ENCODE measurements at regions of chr14 and their contacts with region 1.

Region 1: DNA sequence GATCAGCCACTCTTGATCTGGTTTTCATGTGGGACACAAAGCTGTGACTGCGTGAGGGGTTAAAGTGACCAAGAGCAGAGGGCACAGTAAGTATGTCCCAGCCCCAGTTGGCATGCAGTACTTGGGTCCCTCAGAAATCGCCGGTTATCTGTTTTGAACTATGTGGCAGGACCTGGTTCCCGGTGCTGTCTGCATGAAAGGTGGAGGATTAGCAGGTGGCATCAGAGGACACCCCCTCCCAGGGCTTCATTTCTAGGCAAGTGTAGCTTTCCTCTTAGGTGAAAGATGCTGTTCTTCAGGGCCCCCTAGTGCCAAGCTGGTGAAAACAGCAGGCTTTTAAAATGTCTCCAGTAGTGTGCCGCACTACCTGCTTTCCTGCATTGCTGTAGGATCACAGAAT is 57.1 kb downstream of the ATG14 start:
- DNase-seq: peak; percentile 31 to 82 (median 57)
- ATAC-seq: peak; percentile 92
- H3K4me3 ChIP-seq: no peak overlapping the region
- H3K4me3 Mint-ChIP-seq: peak overlapping the region; percentile 72
- H3K27ac ChIP-seq: peak overlapping the region in 1 of 2 experiments; percentile 64
- H3K27ac Mint-ChIP-seq: peak overlapping the region; percentile 93
- H3K4me1 ChIP-seq: no peaks in the 10 kb centered on the region
- H3K4me1 Mint-ChIP-seq: peaks cover 15% of the 10 kb centered on the region
- H3K27me3 ChIP-seq: no peaks in the 10 kb centered on the region
- H3K27me3 Mint-ChIP-seq: no peaks in the 10 kb centered on the region
- CTCF ChIP-seq: peak; percentile 59

Region 2: GRCh38 chr14:55085060-55085660 is 269.3 kb before region 1 on chr14:
- CTCF ChIA-PET with region 1: interaction called, 3 read pairs
- POLR2A ChIA-PET with region 1: no interaction called
- intact Hi-C with region 1: loop called (anchors 5 kb)
- DNase-seq: peak in 1 of 9 experiments; percentile 5
- ATAC-seq: no peak
- H3K4me3 ChIP-seq: no peak overlapping the region
- H3K4me3 Mint-ChIP-seq: no peak overlapping the region
- H3K27ac ChIP-seq: no peak overlapping the region
- H3K27ac Mint-ChIP-seq: no peak overlapping the region
- H3K4me1 ChIP-seq: no peaks in the 10 kb centered on the region
- H3K4me1 Mint-ChIP-seq: peaks cover 3% of the 10 kb centered on the region
- H3K27me3 ChIP-seq: no peaks in the 10 kb centered on the region
- H3K27me3 Mint-ChIP-seq: no peaks in the 10 kb centered on the region
- CTCF ChIP-seq: no peak

Region 3: GRCh38 chr14:55094321-55095157 is 260.0 kb before region 1 on chr14:
- CTCF ChIA-PET with region 1: interaction called, 3 read pairs
- POLR2A ChIA-PET with region 1: no interaction called
- intact Hi-C with region 1: loop called (anchors 5 kb)
- DNase-seq: no peak
- ATAC-seq: no peak
- H3K4me3 ChIP-seq: no peak overlapping the region
- H3K4me3 Mint-ChIP-seq: no peak overlapping the region
- H3K27ac ChIP-seq: no peak overlapping the region
- H3K27ac Mint-ChIP-seq: no peak overlapping the region
- H3K4me1 ChIP-seq: peaks cover 12% of the 10 kb centered on the region
- H3K4me1 Mint-ChIP-seq: peaks cover 16% of the 10 kb centered on the region
- H3K27me3 ChIP-seq: no peaks in the 10 kb centered on the region
- H3K27me3 Mint-ChIP-seq: no peaks in the 10 kb centered on the region
- CTCF ChIP-seq: no peak

Region 4: GRCh38 chr14:55180434-55180833 is 174.1 kb before region 1 on chr14:
- CTCF ChIA-PET with region 1: no interaction called
- POLR2A ChIA-PET with region 1: no interaction called
- intact Hi-C with region 1: no loop called
- DNase-seq: no peak
- ATAC-seq: no peak
- H3K4me3 ChIP-seq: no peak overlapping the region
- H3K4me3 Mint-ChIP-seq: no peak overlapping the region
- H3K27ac ChIP-seq: no peak overlapping the region
- H3K27ac Mint-ChIP-seq: no peak overlapping the region
- H3K4me1 ChIP-seq: no peaks in the 10 kb centered on the region
- H3K4me1 Mint-ChIP-seq: peaks cover 6% of the 10 kb centered on the region
- H3K27me3 ChIP-seq: no peaks in the 10 kb centered on the region
- H3K27me3 Mint-ChIP-seq: no peaks in the 10 kb centered on the region
- CTCF ChIP-seq: no peak

Region 5: DNA sequence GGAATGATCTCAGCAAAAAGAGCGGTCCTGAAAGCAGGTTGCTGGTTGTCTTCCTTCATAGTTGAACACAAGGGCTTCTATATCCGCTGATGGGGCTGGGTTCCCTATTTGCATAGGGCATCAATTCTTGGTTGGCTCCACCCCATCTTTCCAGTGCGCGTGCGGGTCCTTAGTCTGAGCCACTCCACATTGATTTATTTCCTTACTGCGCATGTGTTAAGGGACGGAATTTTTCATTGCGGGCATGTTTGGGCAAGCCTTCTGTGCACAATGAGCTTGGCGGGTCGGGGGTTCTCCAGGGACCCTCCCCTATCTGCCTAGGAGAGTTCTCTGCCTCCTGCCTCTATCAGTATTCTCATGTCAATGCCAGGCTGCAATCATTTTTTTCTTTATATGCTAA is 141.9 kb before region 1 on chr14:
- CTCF ChIA-PET with region 1: interaction called, 22 read pairs
- POLR2A ChIA-PET with region 1: no interaction called
- intact Hi-C with region 1: loop called (anchors 1 to 2 kb)
- DNase-seq: peak in 1 of 9 experiments; percentile 11
- ATAC-seq: no peak
- H3K4me3 ChIP-seq: no peak overlapping the region
- H3K4me3 Mint-ChIP-seq: no peak overlapping the region
- H3K27ac ChIP-seq: no peak overlapping the region
- H3K27ac Mint-ChIP-seq: no peak overlapping the region
- H3K4me1 ChIP-seq: no peaks in the 10 kb centered on the region
- H3K4me1 Mint-ChIP-seq: peaks cover 3% of the 10 kb centered on the region
- H3K27me3 ChIP-seq: no peaks in the 10 kb centered on the region
- H3K27me3 Mint-ChIP-seq: no peaks in the 10 kb centered on the region
- CTCF ChIP-seq: no peak

Region 6: GRCh38 chr14:55245657-55246268 is 108.7 kb before region 1 on chr14:
- CTCF ChIA-PET with region 1: interaction called, 31 read pairs
- POLR2A ChIA-PET with region 1: no interaction called
- intact Hi-C with region 1: loop called (anchors 1 kb)
- DNase-seq: peak in 5 of 9 experiments; percentile 7 to 66 (median 32)
- ATAC-seq: peak; percentile 52
- H3K4me3 ChIP-seq: no peak overlapping the region
- H3K4me3 Mint-ChIP-seq: no peak overlapping the region
- H3K27ac ChIP-seq: no peak overlapping the region
- H3K27ac Mint-ChIP-seq: no peak overlapping the region
- H3K4me1 ChIP-seq: no peaks in the 10 kb centered on the region
- H3K4me1 Mint-ChIP-seq: no peaks in the 10 kb centered on the region
- H3K27me3 ChIP-seq: no peaks in the 10 kb centered on the region
- H3K27me3 Mint-ChIP-seq: peaks cover 13% of the 10 kb centered on the region
- CTCF ChIP-seq: peak; percentile 61

Region 7: DNA sequence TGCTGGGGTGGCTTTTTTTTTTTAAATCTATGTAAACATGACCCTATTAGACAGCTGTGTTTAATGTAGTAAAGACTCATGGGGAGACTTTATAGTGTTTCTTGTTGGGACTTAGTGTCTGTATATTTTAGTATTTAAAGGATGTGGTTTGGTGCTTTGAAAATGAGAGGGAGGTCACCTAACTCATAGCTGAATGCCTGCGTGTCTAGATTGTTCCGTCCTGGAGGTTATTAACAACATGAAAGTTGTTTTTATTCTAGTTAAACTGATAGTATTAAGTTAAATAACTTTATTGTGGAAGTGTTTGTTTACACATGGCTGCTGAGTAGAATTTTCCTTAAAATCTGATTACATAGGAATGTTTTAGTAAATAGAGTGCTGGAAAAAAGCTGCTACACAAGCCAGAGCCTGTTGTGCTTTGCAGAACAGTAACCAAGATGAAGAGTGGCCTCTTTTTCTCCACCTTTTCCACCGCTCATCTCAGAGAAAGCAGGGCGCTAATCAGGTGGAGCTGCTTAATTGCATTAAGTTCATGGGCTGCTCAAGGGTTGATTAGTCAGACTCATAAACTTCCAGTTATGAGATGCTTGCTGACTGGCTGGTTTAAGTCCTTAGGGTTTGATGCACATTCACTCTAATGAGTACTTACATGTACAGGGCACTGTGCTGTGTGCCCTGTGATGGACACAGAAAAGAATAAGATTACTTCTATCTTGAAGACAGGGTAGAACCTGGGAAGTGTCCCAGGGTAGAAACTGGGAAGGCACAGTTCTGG is 20.6 kb before region 1 on chr14:
- CTCF ChIA-PET with region 1: interaction called, 22 read pairs
- POLR2A ChIA-PET with region 1: interaction called, 13 read pairs
- intact Hi-C with region 1: loop called in 1 of 2 experiments (anchors 2 kb)
- DNase-seq: peak in 2 of 9 experiments; percentile 33 to 58
- ATAC-seq: peak; percentile 10
- H3K4me3 ChIP-seq: peak overlapping the region in 1 of 2 experiments; percentile 2
- H3K4me3 Mint-ChIP-seq: peak overlapping the region; percentile 83
- H3K27ac ChIP-seq: peak overlapping the region; percentile 14 to 83
- H3K27ac Mint-ChIP-seq: peak overlapping the region; percentile 93
- H3K4me1 ChIP-seq: peaks cover 57% of the 10 kb centered on the region
- H3K4me1 Mint-ChIP-seq: peaks cover 76% of the 10 kb centered on the region
- H3K27me3 ChIP-seq: no peaks in the 10 kb centered on the region
- H3K27me3 Mint-ChIP-seq: no peaks in the 10 kb centered on the region
- CTCF ChIP-seq: no peak

Region 8: GRCh38 chr14:55482936-55483605 is 128.6 kb after region 1 on chr14:
- CTCF ChIA-PET with region 1: no interaction called
- POLR2A ChIA-PET with region 1: no interaction called
- intact Hi-C with region 1: no loop called
- DNase-seq: no peak
- ATAC-seq: no peak
- H3K4me3 ChIP-seq: no peak overlapping the region
- H3K4me3 Mint-ChIP-seq: no peak overlapping the region
- H3K27ac ChIP-seq: no peak overlapping the region
- H3K27ac Mint-ChIP-seq: no peak overlapping the region
- H3K4me1 ChIP-seq: no peaks in the 10 kb centered on the region
- H3K4me1 Mint-ChIP-seq: no peaks in the 10 kb centered on the region
- H3K27me3 ChIP-seq: no peaks in the 10 kb centered on the region
- H3K27me3 Mint-ChIP-seq: no peaks in the 10 kb centered on the region
- CTCF ChIP-seq: no peak